Kidney (tissue), 22 donors: ENCODE measurements at regions of chr9 and their contacts with region 1.

Region 1: DNA sequence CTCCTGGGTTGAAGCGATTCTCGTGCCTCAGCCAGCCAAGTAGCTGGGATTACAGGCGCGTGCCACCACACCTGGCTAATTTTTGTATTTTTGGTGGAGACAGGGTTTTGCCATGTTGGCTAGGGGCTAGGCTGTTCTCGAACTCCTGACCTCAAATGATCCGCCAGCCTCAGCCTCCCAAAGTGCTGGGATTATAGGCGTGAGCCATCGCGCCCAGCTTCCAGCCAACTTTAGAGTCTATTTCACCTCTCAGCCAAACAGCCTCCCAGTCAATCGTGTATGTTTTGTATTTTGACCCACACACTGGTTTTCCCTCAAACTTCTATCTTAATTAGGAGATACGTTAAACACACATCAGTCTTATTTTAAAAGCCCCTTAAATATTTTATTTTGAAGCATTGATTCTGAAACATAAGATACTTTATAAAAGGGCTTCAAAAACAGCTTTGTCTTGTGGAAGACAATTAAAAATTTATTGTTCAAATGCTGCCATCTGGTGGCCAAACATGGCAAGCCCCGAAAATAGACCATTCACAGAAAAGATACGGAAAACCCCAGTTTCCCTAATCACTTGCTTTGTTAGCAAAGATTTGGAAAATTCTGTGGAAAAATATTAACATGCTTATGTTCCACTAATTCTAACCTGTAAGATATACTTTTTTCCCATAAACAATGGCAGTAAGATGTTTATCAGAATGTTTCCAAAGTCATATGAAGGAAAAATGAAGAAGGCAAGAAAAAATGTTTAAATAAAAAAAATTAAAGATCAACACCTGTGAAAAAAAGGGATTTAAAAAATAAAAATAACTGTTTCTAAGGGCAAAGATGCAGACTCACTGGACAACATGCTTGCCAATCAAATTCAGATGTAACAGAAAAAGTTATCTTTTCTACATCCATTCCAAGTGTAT is 33.1 kb downstream of the APTX start:
- DNase-seq: peak in 3 of 5 donors; percentile 53 to 77 (median 70)
- H3K4me3 ChIP-seq: no peak overlapping the region
- H3K27ac ChIP-seq: no peak overlapping the region
- H3K4me1 ChIP-seq: no peaks in the 10 kb centered on the region
- H3K27me3 ChIP-seq: no peaks in the 10 kb centered on the region
- CTCF ChIP-seq: peak; percentile 81

Region 2: DNA sequence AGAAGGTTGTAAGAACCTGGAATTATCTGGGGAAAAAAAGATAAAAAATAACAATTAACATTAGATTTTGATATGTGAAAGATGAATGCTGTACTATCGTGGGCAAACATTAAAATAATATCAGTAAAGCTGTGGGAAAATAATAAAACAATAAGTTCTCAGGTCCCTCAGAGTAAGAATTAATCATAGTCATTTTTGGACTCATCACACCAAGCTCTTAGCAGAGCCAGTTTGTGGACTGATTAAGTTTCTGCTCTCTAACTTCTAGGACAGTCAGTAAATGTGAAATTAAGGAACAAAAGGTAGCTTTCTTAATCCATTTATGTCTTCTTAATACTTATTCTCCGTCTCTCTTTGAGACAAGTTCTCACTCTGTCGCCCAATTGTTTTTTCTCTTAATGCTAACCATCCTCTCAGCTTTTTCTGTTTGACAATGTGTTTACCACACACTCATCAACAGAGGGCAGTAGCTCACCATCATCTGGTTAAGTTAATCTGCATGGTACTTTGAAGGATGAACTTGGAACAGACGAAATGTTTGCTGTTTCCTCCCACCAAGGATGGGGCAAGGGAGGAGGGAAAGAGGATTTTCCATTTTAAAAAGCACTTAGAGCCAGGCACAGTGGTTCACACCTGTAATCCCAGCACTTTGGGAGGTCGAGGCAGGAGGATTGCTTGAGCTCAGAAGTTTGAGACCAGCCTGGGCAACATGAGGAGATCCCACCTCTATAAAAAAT is 589.2 kb before region 1 on chr9:
- intact Hi-C with region 1: loop called (anchors 10 kb)
- DNase-seq: peak in 3 of 5 donors; percentile 59 to 95 (median 88)
- H3K4me3 ChIP-seq: no peak overlapping the region
- H3K27ac ChIP-seq: no peak overlapping the region
- H3K4me1 ChIP-seq: peaks cover 0 to 3% (median 2%) of the 10 kb centered on the region in 3 donors
- H3K27me3 ChIP-seq: peaks cover 9% of the 10 kb centered on the region
- CTCF ChIP-seq: peak; percentile 89

Region 3: GRCh38 chr9:32579706-32580331 is 388.5 kb before region 1 on chr9:
- intact Hi-C with region 1: loop called (anchors 10 kb)
- DNase-seq: peak; percentile 56 to 79 (median 64)
- H3K4me3 ChIP-seq: no peak overlapping the region
- H3K27ac ChIP-seq: no peak overlapping the region
- H3K4me1 ChIP-seq: peaks cover 0 to 2% (median 0%) of the 10 kb centered on the region in 3 donors
- H3K27me3 ChIP-seq: no peaks in the 10 kb centered on the region
- CTCF ChIP-seq: peak; percentile 93

Region 4: GRCh38 chr9:33049680-33050361 is 81.5 kb after region 1 on chr9:
- intact Hi-C with region 1: no loop called
- DNase-seq: no peak
- H3K4me3 ChIP-seq: no peak overlapping the region
- H3K27ac ChIP-seq: no peak overlapping the region
- H3K4me1 ChIP-seq: no peaks in the 10 kb centered on the region
- H3K27me3 ChIP-seq: no peaks in the 10 kb centered on the region
- CTCF ChIP-seq: no peak